OCI-LY7 (cell line): ENCODE measurements at regions of chr9 and their contacts with region 1.

Region 1: DNA sequence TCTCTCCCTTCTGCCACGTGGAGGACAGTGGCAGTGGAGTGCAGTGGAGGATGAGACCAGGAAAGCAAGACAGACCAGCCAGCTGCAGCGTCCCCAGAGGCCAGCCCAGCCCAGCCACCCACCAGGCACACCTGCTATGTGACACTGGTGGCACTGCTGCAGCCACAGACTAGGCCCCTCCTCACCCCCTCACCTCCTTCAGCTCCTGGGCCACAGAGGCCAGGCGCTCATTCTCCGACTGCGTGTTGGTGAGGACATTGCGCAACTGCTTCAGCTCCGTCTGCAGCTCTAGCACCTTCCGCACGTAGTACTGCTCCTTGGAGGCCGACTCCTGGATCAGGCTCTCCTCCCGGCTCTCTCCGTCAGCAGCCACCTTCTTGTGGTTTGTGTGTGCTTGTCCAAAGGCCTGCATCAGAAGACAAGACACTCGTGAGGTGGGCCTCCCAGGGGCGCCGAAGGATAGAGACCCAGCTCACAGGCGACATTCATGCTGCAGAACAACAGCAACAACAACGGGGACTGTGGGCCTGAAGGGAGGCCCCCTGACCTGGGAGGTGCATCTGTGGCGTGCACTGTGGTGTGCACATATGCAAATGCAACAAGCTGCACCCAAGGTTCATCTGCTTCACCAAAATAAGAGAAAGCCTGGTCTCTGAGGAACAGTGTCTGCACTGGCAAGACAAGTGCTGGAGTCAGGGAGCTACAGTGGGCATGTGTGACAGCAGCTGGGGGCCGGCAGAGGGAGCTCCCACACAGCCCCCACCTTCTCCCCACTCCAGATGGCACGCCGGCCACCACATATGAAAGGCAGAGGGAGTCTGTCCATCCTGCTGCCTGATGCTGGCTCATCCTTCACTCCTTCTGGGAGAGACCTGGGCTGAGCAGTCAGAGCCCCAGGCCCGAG is 35.5 kb downstream of the BICD2 start:
- DNase-seq: peak; percentile 91
- H3K4me3 ChIP-seq: peak overlapping the region; percentile 63
- H3K27ac ChIP-seq: peak overlapping the region; percentile 83
- H3K4me1 ChIP-seq: peaks cover 85% of the 10 kb centered on the region
- CTCF ChIP-seq: peak; percentile 93

Region 2: DNA sequence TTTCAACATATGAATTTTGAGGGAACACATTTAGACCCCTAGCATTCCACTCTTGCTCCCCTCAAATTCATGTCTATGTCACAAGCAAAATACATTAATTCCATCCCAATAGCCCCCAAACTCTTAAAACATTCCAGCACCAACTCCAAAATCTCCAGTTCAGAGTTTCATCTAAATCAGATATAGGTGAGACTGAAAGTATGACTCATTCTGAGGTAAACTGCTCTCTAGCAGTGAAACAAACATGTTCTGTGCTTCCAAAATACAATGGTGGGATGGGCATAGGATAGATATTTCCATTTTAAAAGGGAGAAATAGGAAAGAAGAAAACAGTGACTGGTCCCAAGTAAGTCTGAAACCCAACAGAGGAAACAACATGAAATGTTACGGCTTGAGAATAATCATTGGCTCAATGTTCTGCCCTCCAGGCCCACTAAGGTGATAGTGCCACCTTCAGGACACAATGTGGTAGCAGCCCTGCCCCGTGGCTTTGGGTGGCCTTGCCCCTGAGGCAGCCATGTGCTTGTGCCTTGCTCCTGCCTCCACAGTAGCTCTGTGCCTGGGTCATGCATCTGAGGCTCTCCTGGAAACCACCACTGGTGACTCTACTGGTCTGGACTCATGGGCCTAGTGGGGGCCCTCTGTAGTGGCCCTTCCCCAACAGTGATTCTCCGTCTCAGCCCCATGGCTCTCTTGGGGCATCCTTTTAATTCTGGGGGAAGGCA is 22.7 kb before region 1 on chr9:
- CTCF ChIA-PET with region 1: no interaction called
- POLR2A ChIA-PET with region 1: no interaction called
- intact Hi-C with region 1: no loop called
- DNase-seq: peak; percentile 56
- H3K4me3 ChIP-seq: no peak overlapping the region
- H3K27ac ChIP-seq: no peak overlapping the region
- H3K4me1 ChIP-seq: no peaks in the 10 kb centered on the region
- CTCF ChIP-seq: peak; percentile 84

Region 3: GRCh38 chr9:92790542-92791527 is 61.8 kb after region 1 on chr9:
- CTCF ChIA-PET with region 1: interaction called, 3 read pairs
- POLR2A ChIA-PET with region 1: interaction called, 5 read pairs
- intact Hi-C with region 1: loop called (anchors 1 kb)
- DNase-seq: peak; percentile 84
- H3K4me3 ChIP-seq: no peak overlapping the region
- H3K27ac ChIP-seq: no peak overlapping the region
- H3K4me1 ChIP-seq: peaks cover 18% of the 10 kb centered on the region
- CTCF ChIP-seq: peak; percentile 97